Psoas muscle (tissue), 8 donors: ENCODE measurements at regions of chr19 and their contacts with region 1.

Region 1: DNA sequence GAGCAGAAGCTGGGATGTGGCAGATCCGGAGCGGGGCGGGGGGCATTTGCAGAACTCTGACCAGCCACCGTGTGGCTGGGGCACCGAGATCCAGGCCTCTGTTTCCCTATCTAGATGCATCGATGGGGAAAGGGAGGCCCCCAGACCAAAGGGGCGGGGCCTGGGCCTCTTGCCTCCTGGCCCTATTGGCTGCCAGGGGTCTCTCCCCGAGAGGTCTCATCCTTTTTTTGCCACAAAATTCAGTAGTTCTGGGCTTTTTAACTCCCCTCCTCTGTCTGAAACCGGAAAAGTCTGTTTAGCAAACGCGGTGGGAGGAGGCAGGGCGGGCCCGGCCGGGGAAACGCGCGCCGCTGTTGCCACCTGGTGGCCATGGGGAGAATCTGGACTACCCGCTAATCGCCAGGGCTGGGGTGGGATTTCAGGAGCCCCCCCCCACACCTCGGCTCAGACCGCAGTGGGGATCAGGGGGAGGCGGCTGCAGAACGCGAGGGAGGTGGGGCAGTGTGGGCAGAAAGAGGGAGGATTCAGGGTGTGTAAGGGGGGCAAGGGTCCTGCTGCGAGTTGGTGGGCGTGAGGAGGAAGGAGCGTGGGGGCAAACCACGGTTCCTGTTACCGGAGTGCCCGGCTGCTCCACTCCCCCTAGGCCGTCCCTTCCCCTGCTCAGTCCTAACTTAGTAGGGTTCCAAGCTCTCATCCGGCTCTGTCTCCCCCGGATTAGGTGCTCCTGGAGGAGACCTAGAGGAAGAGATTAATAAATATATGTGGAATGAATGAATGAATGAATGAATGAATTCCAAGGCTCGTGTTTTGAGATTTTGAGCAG is 28.3 kb downstream of the IL12RB1 start:
- DNase-seq: peak; percentile 81 to 90
- ATAC-seq: peak; percentile 88 to 96 (median 90)
- H3K4me3 ChIP-seq: peak overlapping the region; percentile 44
- H3K27ac ChIP-seq: peak overlapping the region; percentile 85
- H3K4me1 ChIP-seq: peaks cover 15% of the 10 kb centered on the region
- H3K27me3 ChIP-seq: no peaks in the 10 kb centered on the region
- CTCF ChIP-seq: peak; percentile 94

Region 2: DNA sequence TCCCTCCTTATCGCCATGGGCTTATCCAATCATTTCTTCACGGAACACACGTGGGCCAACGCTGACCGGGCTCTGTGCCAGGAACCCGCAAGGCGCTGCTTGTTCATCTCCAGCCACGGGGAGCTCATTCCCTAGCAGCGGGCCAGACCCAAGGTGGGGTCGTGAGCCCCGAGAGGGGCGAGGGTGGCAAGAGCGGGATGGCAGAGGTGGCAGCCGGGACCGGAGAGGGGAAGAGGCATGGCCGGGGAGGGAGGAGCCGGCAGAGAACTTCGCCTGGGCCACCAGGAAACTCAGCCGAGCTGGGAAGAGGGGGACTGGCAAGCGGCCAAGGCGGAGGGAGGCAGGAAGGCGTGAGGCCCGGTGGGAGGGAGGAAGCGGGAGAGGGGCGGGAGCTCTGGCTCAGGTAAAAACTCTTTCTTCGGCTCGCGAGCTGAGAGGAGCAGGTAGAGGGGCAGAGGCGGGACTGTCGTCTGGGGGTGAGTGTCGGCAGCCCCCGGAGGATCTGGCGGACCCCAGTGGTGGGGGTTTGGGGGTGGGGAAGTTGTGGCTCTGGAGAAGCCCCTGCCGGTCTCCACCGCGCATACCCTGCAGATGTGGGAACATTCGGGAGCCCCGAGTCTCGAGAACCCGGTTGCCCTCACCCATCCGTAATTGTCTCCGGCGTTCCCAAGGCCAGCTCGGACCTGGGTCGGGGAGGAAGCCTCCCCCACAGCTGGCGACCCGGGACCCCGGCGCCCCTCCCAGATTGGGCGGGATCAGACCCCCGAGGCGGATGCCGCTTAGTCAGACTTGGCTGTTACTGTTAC is 263.5 kb before region 1 on chr19 and contains the start of gene B3GNT3:
- intact Hi-C with region 1: no loop called
- DNase-seq: peak in 1 of 2 donors; percentile 24
- ATAC-seq: no peak
- H3K4me3 ChIP-seq: no peak within 1 kb of the TSS
- H3K27ac ChIP-seq: no peak within 1 kb of the TSS
- H3K4me1 ChIP-seq: no peaks in the 10 kb centered on the region
- H3K27me3 ChIP-seq: peaks cover 0 to 59% (median 14%) of the 10 kb centered on the region in 3 donors
- CTCF ChIP-seq: no peak
- total RNA-seq, gene B3GNT3: 0.38 TPM in 1 of 4 donors, not detected in the others

Region 3: GRCh38 chr19:17938092-17938845 is 120.2 kb before region 1 on chr19:
- intact Hi-C with region 1: loop called in 1 of 2 experiments (anchors 5 kb)
- DNase-seq: peak; percentile 80 to 88
- ATAC-seq: peak; percentile 81 to 90 (median 86)
- H3K4me3 ChIP-seq: no peak overlapping the region
- H3K27ac ChIP-seq: no peak overlapping the region
- H3K4me1 ChIP-seq: peaks cover 12% of the 10 kb centered on the region
- H3K27me3 ChIP-seq: no peaks in the 10 kb centered on the region
- CTCF ChIP-seq: peak; percentile 88

Region 4: DNA sequence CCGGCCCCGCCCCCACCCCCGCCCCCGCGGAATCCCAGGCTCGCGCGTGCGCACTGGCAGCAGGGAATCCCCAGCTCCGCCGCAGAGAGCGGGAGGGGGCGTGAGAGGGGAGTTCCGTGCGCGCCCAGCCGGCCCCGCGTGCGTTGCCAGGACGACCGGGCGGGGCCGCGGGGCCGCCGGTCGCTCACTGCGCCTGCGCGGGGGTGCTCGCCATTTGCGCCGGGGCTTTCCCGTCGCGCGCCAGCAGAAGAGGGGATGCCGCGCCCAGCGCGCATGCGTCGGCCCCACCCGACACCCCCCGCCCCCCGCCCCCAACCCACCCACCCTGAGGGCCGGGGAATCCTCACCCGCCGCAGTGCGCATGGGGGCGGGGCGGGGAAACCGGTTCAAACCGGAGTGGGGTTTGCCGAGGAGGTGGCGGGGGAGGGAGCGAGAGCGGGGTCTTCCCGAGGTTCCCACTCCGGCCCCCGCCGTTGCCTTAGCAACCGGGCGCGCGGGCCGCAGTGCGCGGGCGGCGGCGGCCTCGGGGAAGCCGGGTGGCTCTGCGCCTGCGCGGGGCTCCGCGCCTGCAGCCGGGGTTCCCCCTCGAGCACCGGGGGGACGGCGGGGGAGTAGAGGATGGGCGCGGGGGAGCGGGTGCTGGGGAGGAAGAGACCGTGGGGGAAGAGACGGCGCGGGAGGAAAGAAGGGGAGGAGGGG is 110.5 kb before region 1 on chr19:
- intact Hi-C with region 1: loop called in 1 of 2 experiments (anchors 5 kb)
- DNase-seq: peak; percentile 90 to 95
- ATAC-seq: peak; percentile 85 to 90 (median 89)
- H3K4me3 ChIP-seq: peak overlapping the region; percentile 82
- H3K27ac ChIP-seq: no peak overlapping the region
- H3K4me1 ChIP-seq: peaks cover 15% of the 10 kb centered on the region
- H3K27me3 ChIP-seq: peaks cover 0 to 42% (median 36%) of the 10 kb centered on the region in 3 donors
- CTCF ChIP-seq: no peak

Region 5: GRCh38 chr19:18007044-18007916 is 51.1 kb before region 1 on chr19:
- intact Hi-C with region 1: loop called (anchors 1 kb)
- DNase-seq: peak; percentile 84 to 93
- ATAC-seq: peak; percentile 67 to 84 (median 72)
- H3K4me3 ChIP-seq: peak overlapping the region; percentile 85
- H3K27ac ChIP-seq: peak overlapping the region; percentile 97
- H3K4me1 ChIP-seq: peaks cover 25% of the 10 kb centered on the region
- H3K27me3 ChIP-seq: peaks cover 0 to 10% (median 0%) of the 10 kb centered on the region in 3 donors
- CTCF ChIP-seq: peak; percentile 99